Right ventricle myocardium superior (tissue), 1 donor: ENCODE measurements at regions of chr9 and their contacts with region 1.

Region 1: GRCh38 chr9:76562511-76562911 is 103.5 kb downstream of the GCNT1 start:
- DNase-seq: no peak
- ATAC-seq: peak; percentile 39

Region 2: GRCh38 chr9:76610011-76610352 is 47.5 kb after region 1 on chr9:
- intact Hi-C with region 1: loop called (anchors 5 kb)
- DNase-seq: peak; percentile 88
- ATAC-seq: peak; percentile 98